Lower leg skin (tissue), 4 donors: ENCODE measurements at regions of chr6 and their contacts with region 1.

Region 1: DNA sequence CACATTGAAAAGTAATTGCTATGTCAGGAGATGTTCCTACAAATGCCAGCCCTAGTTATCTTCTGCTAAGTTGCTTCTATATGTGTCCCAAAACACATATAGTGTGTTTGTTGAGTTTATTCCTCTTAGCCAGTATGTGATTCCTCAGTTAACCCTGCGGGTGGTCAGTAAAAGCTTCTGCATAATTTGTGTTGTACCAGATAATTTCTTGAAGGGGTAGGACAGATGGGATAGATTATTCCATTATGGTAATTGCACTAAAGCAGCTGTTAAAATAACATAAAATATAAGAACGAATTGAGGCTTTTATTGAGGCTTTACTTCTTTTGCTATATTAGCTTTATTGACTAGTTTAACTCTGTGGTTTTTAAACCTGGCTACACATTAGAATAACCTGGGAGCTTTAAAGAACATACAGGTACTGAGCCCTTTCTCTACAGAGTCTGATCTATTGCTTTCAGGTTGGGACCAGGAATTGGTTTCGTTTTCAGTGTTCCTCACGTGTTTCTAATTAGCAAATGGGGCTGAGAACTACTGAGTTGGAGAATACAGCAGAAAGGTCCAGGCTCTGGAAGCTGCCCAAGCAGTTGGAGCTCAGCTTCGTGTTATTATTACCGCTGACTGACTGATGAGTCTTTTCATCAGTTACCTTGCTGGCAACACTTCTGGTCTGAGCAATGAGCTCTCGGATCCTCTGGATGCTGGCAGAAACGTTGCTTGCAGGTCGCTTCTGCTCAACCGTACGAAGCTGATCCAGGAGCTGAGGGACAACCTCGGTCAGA is 56.9 kb downstream of the FAM229B start:
- DNase-seq: no peak
- H3K4me3 ChIP-seq: no peak overlapping the region
- CTCF ChIP-seq: no peak
- POLR2A ChIP-seq: no peak

Region 2: GRCh38 chr6:111517965-111518364 is 626.4 kb before region 1 on chr6:
- intact Hi-C with region 1: loop called (anchors 5 kb)
- DNase-seq: no peak
- H3K4me3 ChIP-seq: no peak overlapping the region
- CTCF ChIP-seq: no peak
- POLR2A ChIP-seq: no peak

Region 3: GRCh38 chr6:111997078-111997852 is 147.1 kb before region 1 on chr6:
- intact Hi-C with region 1: no loop called
- DNase-seq: peak; percentile 76 to 95
- H3K4me3 ChIP-seq: no peak overlapping the region
- CTCF ChIP-seq: peak in 1 of 3 donors; percentile 89
- POLR2A ChIP-seq: no peak